IMR-90 (cell line): ENCODE measurements at regions of chr2 and their contacts with region 1.

Region 1: DNA sequence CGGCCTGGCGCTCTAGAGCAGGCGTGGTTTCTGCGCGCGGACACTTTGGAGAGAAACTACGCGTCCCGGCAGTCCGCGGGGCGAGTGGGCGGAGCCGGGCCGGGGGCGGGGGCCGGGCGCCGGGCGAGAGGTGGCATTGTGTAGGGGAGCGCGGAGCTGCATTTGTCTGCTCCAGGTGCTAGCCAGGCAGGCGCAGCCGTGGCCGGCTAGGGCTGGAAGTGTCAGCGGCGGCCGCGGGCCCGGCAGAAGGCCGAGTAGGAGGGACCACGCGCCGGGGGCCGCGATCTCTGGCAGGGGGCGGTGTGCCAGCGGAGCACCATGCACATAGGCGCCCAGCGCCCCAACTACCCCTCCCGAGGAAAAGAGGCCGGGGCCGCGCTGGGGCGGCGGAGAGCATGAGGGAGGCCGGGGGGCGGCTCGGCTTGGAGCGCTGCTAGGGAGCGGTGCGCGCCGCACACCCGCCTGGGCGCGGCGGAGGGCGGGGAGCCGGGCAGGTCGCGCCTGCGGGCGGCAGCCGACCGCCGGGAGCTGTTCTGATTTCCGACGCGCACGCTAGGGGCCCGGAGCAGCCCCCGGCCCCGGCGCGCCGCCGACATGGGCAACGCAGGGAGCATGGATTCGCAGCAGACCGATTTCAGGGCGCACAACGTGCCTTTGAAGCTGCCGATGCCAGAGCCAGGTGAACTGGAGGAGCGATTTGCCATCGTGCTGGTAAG is at the start of gene FMNL2:
- DNase-seq: peak; percentile 65
- ATAC-seq: peak; percentile 91
- H3K4me3 ChIP-seq: peak within 1 kb of the TSS; percentile 98
- H3K27ac ChIP-seq: peak within 1 kb of the TSS; percentile 63
- H3K4me1 ChIP-seq: peaks cover 2% of the 10 kb centered on the region; the same call in 1 of the 2 replicates
- H3K27me3 ChIP-seq: no peaks in the 10 kb centered on the region
- CTCF ChIP-seq: no peak
- POLR2A ChIP-seq: peak; percentile 56; the same call in 1 of the 2 replicates
- RAD21 ChIP-seq: 0 out of 2 replicates have a peak, but pooled peaks have one; percentile 10
- total RNA-seq, gene FMNL2: 10.9 and 15.6 TPM in 2 replicates

Region 2: GRCh38 chr2:152189622-152190495 is 145.3 kb before region 1 on chr2:
- CTCF ChIA-PET with region 1: interaction called, 3 read pairs
- POLR2A ChIA-PET with region 1: no interaction called
- dilution Hi-C with region 1: no loop called
- in situ Hi-C with region 1: no loop called
- intact Hi-C with region 1: loop called (anchors 1 kb)
- DNase-seq: peak; percentile 77
- ATAC-seq: peak; percentile 99
- H3K4me3 ChIP-seq: no peak overlapping the region
- H3K27ac ChIP-seq: no peak overlapping the region
- H3K4me1 ChIP-seq: no peaks in the 10 kb centered on the region
- H3K27me3 ChIP-seq: no peaks in the 10 kb centered on the region
- CTCF ChIP-seq: peak; percentile 96
- POLR2A ChIP-seq: peak; percentile 52; the same call in 1 of the 2 replicates
- RAD21 ChIP-seq: peak; percentile 97

Region 3: DNA sequence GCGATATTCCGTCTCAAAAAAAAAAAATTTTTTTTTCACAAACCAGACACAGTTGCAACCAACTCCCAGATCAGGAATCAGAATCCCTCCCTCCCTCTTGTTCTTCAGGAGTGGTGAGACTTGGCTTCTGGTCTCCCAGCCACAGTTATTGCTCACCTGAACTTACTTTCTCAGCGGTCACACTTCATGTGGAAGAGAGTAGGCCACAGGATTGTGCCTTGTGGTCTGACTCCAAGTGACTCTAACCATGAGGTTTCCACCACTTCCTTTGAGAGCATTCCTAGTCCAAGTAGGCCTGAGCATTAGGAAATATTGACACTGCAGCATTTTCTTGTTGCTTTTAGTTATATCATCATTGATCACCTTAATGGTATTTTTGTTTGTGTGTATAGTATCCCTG is 11.9 kb after region 1 on chr2:
- CTCF ChIA-PET with region 1: no interaction called
- POLR2A ChIA-PET with region 1: no interaction called
- dilution Hi-C with region 1: no loop called
- in situ Hi-C with region 1: no loop called
- intact Hi-C with region 1: no loop called
- DNase-seq: peak; percentile 74
- ATAC-seq: no peak
- H3K4me3 ChIP-seq: no peak overlapping the region
- H3K27ac ChIP-seq: no peak overlapping the region
- H3K4me1 ChIP-seq: no peaks in the 10 kb centered on the region
- H3K27me3 ChIP-seq: no peaks in the 10 kb centered on the region
- CTCF ChIP-seq: no peak
- POLR2A ChIP-seq: no peak
- RAD21 ChIP-seq: no peak

Region 4: GRCh38 chr2:152418688-152419087 is 83.5 kb after region 1 on chr2:
- CTCF ChIA-PET with region 1: interaction called, 3 read pairs
- POLR2A ChIA-PET with region 1: no interaction called
- dilution Hi-C with region 1: no loop called
- in situ Hi-C with region 1: no loop called
- intact Hi-C with region 1: loop called (anchors 5 kb)
- DNase-seq: peak; percentile 79
- ATAC-seq: peak; percentile 12; the same call in 1 of the 2 replicates
- H3K4me3 ChIP-seq: no peak overlapping the region
- H3K27ac ChIP-seq: no peak overlapping the region
- H3K4me1 ChIP-seq: peaks cover 15% of the 10 kb centered on the region
- H3K27me3 ChIP-seq: no peaks in the 10 kb centered on the region
- CTCF ChIP-seq: no peak; the same call in 1 of the 2 replicates
- POLR2A ChIP-seq: no peak
- RAD21 ChIP-seq: 0 out of 2 replicates have a peak, but pooled peaks have one; percentile 37

Region 5: GRCh38 chr2:152490686-152491455 is 155.7 kb after region 1 on chr2:
- CTCF ChIA-PET with region 1: no interaction called
- POLR2A ChIA-PET with region 1: no interaction called
- dilution Hi-C with region 1: no loop called
- in situ Hi-C with region 1: no loop called
- intact Hi-C with region 1: loop called (anchors 5 kb)
- DNase-seq: no peak
- ATAC-seq: no peak
- H3K4me3 ChIP-seq: no peak overlapping the region
- H3K27ac ChIP-seq: no peak overlapping the region
- H3K4me1 ChIP-seq: peaks cover 7% of the 10 kb centered on the region; the same call in 1 of the 2 replicates
- H3K27me3 ChIP-seq: no peaks in the 10 kb centered on the region
- CTCF ChIP-seq: no peak
- POLR2A ChIP-seq: no peak
- RAD21 ChIP-seq: no peak

Region 6: GRCh38 chr2:152611458-152612231 is 276.5 kb after region 1 on chr2:
- CTCF ChIA-PET with region 1: interaction called, 5 read pairs
- POLR2A ChIA-PET with region 1: no interaction called
- dilution Hi-C with region 1: no loop called
- in situ Hi-C with region 1: no loop called
- intact Hi-C with region 1: loop called (anchors 5 kb)
- DNase-seq: peak; percentile 80
- ATAC-seq: peak; percentile 84
- H3K4me3 ChIP-seq: no peak overlapping the region
- H3K27ac ChIP-seq: no peak overlapping the region
- H3K4me1 ChIP-seq: peaks cover 5% of the 10 kb centered on the region; the same call in 1 of the 2 replicates
- H3K27me3 ChIP-seq: no peaks in the 10 kb centered on the region
- CTCF ChIP-seq: no peak
- POLR2A ChIP-seq: no peak
- RAD21 ChIP-seq: no peak

Region 7: GRCh38 chr2:152635635-152636298 is 300.6 kb after region 1 on chr2:
- CTCF ChIA-PET with region 1: interaction called, 4 read pairs
- POLR2A ChIA-PET with region 1: no interaction called
- dilution Hi-C with region 1: no loop called
- in situ Hi-C with region 1: no loop called
- intact Hi-C with region 1: loop called (anchors 2 kb)
- DNase-seq: peak; percentile 53
- ATAC-seq: peak; percentile 79
- H3K4me3 ChIP-seq: no peak overlapping the region
- H3K27ac ChIP-seq: no peak overlapping the region
- H3K4me1 ChIP-seq: no peaks in the 10 kb centered on the region
- H3K27me3 ChIP-seq: no peaks in the 10 kb centered on the region
- CTCF ChIP-seq: peak; percentile 75
- POLR2A ChIP-seq: no peak
- RAD21 ChIP-seq: peak; percentile 82